PC-3 (cell line): ENCODE measurements at regions of chr16 and their contacts with region 1.

Region 1: DNA sequence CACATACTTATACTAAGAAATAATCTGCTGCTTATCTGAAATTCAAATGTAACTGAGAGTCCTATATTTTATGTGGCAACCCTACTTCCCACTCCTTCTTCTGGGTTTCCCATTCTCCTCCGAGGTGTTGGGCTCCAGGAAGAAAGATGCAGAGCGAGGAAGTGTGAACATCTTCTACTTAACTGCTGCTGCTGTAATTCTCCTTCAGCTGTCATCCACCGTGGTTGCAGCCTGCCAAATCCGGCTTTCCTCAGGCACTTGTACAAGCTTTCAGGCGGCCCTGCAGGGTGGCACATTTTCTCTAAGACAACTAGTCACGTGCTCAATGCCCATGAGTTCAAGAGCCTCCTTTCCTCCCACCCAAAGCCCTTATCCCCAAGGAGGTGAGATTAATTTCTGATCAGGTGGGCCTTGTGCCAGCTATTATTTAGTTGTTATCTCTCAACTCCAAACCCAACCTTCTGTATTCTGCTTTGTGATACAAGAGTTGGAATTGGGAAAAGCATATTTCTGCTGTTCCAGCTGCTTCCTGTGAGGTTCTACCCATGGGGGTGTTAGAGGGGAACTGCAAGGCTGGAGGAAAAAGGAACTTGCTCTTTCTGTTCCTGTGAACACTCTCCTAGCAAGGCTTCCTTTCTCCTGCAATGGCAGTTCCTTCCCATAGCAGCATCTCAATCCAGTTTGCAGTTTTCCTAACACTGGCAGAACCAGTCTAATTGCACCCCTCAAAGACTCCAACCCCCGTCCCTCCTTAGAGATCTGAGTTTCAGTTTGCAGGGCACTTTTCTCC is 67.6 kb upstream of the RBBP6 start:
- DNase-seq: no peak
- ATAC-seq: no peak
- H3K4me3 ChIP-seq: no peak overlapping the region
- H3K27ac ChIP-seq: no peak overlapping the region
- H3K4me1 ChIP-seq: no peaks in the 10 kb centered on the region
- H3K27me3 ChIP-seq: 0 out of 2 replicates have a peak, but pooled peaks cover 14% of the 10 kb centered on the region
- CTCF ChIP-seq: no peak

Region 2: DNA sequence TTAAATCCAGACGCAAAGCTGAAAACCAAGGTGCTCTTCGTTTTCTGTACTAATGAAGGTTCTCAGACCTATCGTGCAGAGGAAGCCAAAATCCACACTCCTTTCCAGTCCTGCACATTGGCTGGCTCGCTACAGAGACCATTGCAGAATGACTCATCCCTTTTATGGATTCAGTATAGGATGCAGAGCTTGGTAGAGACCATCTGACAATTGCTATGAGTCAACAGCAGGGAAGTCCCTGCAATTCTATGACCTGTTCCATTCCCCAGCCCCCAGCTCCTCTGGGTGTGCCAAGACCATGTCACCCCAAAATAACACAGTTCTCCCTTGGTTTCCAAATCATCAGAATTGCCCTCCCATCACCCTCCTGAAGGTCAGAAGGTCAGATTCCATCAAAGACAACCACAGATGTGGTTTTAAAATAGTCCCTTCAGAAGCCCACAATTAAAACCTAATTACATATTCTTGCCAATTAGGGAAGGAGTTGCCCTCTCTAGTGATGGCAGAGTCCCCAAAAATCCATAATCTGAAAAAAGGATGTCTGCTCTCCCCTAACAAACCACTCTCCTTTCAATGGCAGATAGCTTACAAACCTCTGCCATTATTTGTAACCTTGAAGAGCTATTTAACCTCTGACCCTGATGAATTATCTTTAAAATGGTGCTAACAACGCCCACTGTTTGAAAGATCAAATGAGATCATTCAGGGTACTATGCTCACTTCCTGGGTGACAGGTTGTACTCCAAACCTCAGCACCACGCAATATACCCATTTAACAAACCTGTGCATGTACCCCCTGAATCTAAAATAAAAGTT is 40.6 kb before region 1 on chr16:
- CTCF ChIA-PET with region 1: no interaction called
- POLR2A ChIA-PET with region 1: no interaction called
- intact Hi-C with region 1: no loop called
- DNase-seq: peak; percentile 29
- ATAC-seq: peak; percentile 46; the same call in 1 of the 2 replicates
- H3K4me3 ChIP-seq: no peak overlapping the region
- H3K27ac ChIP-seq: no peak overlapping the region
- H3K4me1 ChIP-seq: no peaks in the 10 kb centered on the region
- H3K27me3 ChIP-seq: peaks cover 32% of the 10 kb centered on the region
- CTCF ChIP-seq: no peak

Region 3: GRCh38 chr16:24493859-24494258 is 22.1 kb after region 1 on chr16:
- CTCF ChIA-PET with region 1: no interaction called
- POLR2A ChIA-PET with region 1: interaction called, 13 read pairs
- intact Hi-C with region 1: no loop called
- DNase-seq: peak; percentile 68
- ATAC-seq: peak; percentile 70
- H3K4me3 ChIP-seq: no peak overlapping the region
- H3K27ac ChIP-seq: no peak overlapping the region
- H3K4me1 ChIP-seq: no peaks in the 10 kb centered on the region; the same call in 1 of the 2 replicates
- H3K27me3 ChIP-seq: peaks cover 6% of the 10 kb centered on the region; the same call in 1 of the 2 replicates
- CTCF ChIP-seq: no peak